ENCODE measurements at regions of chr16 and their contacts with region 1.

Region 1: DNA sequence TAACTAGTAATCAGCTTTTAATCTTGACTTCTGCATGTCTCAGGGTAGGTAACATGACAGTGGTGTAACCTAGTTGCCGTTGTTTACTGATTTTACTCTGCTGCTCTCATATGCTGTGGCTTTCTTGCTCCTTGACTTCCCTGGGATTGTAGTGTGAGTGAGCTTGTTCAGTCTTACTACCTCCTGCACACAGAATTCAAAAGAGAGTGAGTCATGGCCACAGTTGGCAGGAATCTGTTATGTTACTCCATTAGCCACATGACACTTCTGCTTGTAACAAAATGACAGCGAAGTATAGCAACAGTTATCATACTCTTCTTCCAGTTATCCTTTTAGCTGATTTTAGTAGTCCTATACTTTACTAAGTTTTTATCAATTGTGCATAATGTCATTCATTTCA is 18.8 kb downstream of the TNRC6A start:
- DNase-seq: peak; percentile 90
- H3K4me3 Mint-ChIP-seq: peak overlapping the region; percentile 21
- H3K27ac Mint-ChIP-seq: peak overlapping the region; percentile 96
- H3K4me1 Mint-ChIP-seq: peaks cover 57% of the 10 kb centered on the region
- H3K27me3 Mint-ChIP-seq: no peaks in the 10 kb centered on the region
- CTCF ChIP-seq: no peak

Region 2: DNA sequence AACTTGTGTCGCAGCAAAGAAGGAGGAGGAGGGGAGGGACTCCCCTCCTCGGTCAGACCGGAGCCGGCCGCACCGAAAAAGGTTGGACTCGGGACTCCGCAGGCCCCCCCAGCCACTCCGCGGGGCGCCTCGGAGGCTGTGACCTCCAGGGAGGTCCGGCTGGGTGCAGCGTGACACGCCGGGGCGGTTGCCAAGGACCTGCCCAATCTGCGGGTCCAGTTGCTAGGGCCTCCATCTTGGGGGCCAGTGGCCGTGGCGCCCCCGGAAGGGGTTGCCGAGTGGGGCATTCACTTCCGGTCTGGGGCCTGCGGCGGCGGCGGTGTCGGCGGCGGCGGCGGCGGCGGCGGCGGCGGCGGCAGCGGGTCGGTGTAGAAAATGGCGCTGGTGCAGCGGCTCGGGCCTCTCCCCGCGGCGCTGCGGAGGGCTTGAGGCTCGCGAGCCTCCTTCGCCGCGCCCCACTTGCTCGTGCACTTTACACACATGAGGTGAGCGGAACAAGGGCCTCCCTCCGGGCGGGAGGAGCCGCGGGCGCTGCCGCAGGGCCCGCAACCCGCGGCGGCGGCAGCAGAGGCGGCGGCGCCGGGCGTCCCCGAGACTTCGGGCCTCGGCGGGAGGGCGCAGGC is 18.8 kb before region 1 on chr16 and contains the start of gene TNRC6A:
- CTCF ChIA-PET with region 1: interaction called, 4 read pairs
- POLR2A ChIA-PET with region 1: interaction called, 19 read pairs
- intact Hi-C with region 1: no loop called
- DNase-seq: peak; percentile 83
- H3K4me3 Mint-ChIP-seq: peak within 1 kb of the TSS; percentile 88
- H3K27ac Mint-ChIP-seq: peak within 1 kb of the TSS; percentile 93
- H3K4me1 Mint-ChIP-seq: peaks cover 27% of the 10 kb centered on the region
- H3K27me3 Mint-ChIP-seq: no peaks in the 10 kb centered on the region
- CTCF ChIP-seq: no peak
- total RNA-seq, gene TNRC6A: 41.6 and 50.3 TPM in 2 replicates

Region 3: DNA sequence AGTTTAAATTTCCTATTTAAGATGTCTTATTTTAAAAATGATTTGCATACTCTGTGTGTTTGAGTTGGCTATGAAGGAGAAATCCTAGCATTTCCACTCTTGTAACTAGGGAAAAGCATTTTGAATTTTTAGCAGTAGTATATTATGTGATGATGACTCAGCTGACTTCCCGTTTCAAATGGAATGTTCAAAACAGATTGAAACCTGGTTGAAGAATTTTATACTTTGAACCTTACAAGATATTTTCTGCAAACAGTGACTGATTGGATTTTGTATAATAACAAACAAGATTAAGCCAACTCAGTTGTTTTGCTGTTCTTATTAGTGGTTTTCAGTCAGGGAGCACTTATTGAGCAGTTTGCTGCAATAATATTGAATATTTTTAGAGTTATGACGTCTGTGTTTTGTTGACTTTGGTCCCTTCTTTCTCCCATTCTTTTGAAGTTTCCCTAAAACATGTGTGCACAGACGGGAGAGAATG is 10.8 kb before region 1 on chr16:
- CTCF ChIA-PET with region 1: interaction called, 4 read pairs
- POLR2A ChIA-PET with region 1: interaction called, 17 read pairs
- intact Hi-C with region 1: no loop called
- DNase-seq: no peak
- H3K4me3 Mint-ChIP-seq: peak overlapping the region; percentile 37
- H3K27ac Mint-ChIP-seq: peak overlapping the region; percentile 84
- H3K4me1 Mint-ChIP-seq: peaks cover 44% of the 10 kb centered on the region
- H3K27me3 Mint-ChIP-seq: no peaks in the 10 kb centered on the region
- CTCF ChIP-seq: no peak

Region 4: GRCh38 chr16:24758373-24758772 is 10.1 kb after region 1 on chr16:
- CTCF ChIA-PET with region 1: interaction called, 7 read pairs
- POLR2A ChIA-PET with region 1: interaction called, 15 read pairs
- intact Hi-C with region 1: no loop called
- DNase-seq: no peak
- H3K4me3 Mint-ChIP-seq: no peak overlapping the region
- H3K27ac Mint-ChIP-seq: no peak overlapping the region
- H3K4me1 Mint-ChIP-seq: peaks cover 1% of the 10 kb centered on the region
- H3K27me3 Mint-ChIP-seq: no peaks in the 10 kb centered on the region
- CTCF ChIP-seq: no peak

Region 5: GRCh38 chr16:24850289-24850938 is 102.2 kb after region 1 on chr16:
- CTCF ChIA-PET with region 1: no interaction called
- POLR2A ChIA-PET with region 1: no interaction called
- intact Hi-C with region 1: no loop called
- DNase-seq: peak; percentile 70
- H3K4me3 Mint-ChIP-seq: no peak overlapping the region
- H3K27ac Mint-ChIP-seq: peak overlapping the region; percentile 70
- H3K4me1 Mint-ChIP-seq: peaks cover 22% of the 10 kb centered on the region
- H3K27me3 Mint-ChIP-seq: peaks cover 12% of the 10 kb centered on the region
- CTCF ChIP-seq: no peak